PC-3 (cell line): ENCODE measurements at regions of chrX and their contacts with region 1.

Region 1: GRCh38 chrX:17495044-17495443 is 120.0 kb downstream of the NHS start:
- DNase-seq: peak; percentile 87
- ATAC-seq: peak; percentile 91
- H3K4me3 ChIP-seq: no peak overlapping the region; the same call in 1 of the 2 replicates
- H3K27ac ChIP-seq: peak overlapping the region; percentile 97
- H3K4me1 ChIP-seq: peaks cover 63% of the 10 kb centered on the region
- H3K27me3 ChIP-seq: no peaks in the 10 kb centered on the region
- CTCF ChIP-seq: no peak

Region 2: DNA sequence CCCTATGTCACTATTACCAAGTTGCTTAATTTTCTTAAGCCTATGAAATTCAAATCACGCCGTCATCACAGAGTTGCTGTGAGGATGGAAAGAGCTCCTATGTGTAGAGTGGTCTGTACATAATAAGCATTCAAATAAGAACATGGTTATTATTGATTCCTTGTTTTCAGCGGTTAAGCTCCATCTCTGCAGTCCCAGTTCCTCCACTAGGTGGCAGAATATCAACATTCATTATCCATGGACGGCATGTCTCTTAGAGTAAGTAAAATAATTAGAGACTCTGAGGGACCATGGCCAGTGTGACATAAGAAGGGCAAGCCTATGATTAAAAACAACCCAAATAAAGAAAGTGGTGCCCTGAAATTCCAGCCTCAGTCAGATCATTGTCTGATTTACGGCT is 252.6 kb before region 1 on chrX:
- CTCF ChIA-PET with region 1: no interaction called
- POLR2A ChIA-PET with region 1: no interaction called
- intact Hi-C with region 1: no loop called
- DNase-seq: peak; percentile 78
- ATAC-seq: peak; percentile 78
- H3K4me3 ChIP-seq: no peak overlapping the region
- H3K27ac ChIP-seq: no peak overlapping the region
- H3K4me1 ChIP-seq: no peaks in the 10 kb centered on the region
- H3K27me3 ChIP-seq: no peaks in the 10 kb centered on the region
- CTCF ChIP-seq: peak; percentile 83

Region 3: GRCh38 chrX:17413228-17413627 is 81.8 kb before region 1 on chrX:
- CTCF ChIA-PET with region 1: no interaction called
- POLR2A ChIA-PET with region 1: no interaction called
- intact Hi-C with region 1: loop called (anchors 1 kb)
- DNase-seq: peak; percentile 45
- ATAC-seq: peak; percentile 23
- H3K4me3 ChIP-seq: peak overlapping the region; percentile 55
- H3K27ac ChIP-seq: peak overlapping the region; percentile 99
- H3K4me1 ChIP-seq: peaks cover 49% of the 10 kb centered on the region
- H3K27me3 ChIP-seq: no peaks in the 10 kb centered on the region
- CTCF ChIP-seq: no peak

Region 4: GRCh38 chrX:17441965-17442364 is 53.1 kb before region 1 on chrX:
- CTCF ChIA-PET with region 1: no interaction called
- POLR2A ChIA-PET with region 1: no interaction called
- intact Hi-C with region 1: loop called (anchors 1 kb)
- DNase-seq: peak; percentile 80
- ATAC-seq: peak; percentile 97
- H3K4me3 ChIP-seq: 0 out of 2 replicates have a peak overlapping the region, but pooled peaks have one; percentile 30
- H3K27ac ChIP-seq: peak overlapping the region; percentile 93
- H3K4me1 ChIP-seq: peaks cover 33% of the 10 kb centered on the region
- H3K27me3 ChIP-seq: no peaks in the 10 kb centered on the region
- CTCF ChIP-seq: no peak

Region 5: GRCh38 chrX:17597836-17598442 is 102.9 kb after region 1 on chrX:
- CTCF ChIA-PET with region 1: no interaction called
- POLR2A ChIA-PET with region 1: no interaction called
- intact Hi-C with region 1: loop called (anchors 2 kb)
- DNase-seq: no peak
- ATAC-seq: no peak
- H3K4me3 ChIP-seq: no peak overlapping the region
- H3K27ac ChIP-seq: no peak overlapping the region
- H3K4me1 ChIP-seq: peaks cover 23% of the 10 kb centered on the region
- H3K27me3 ChIP-seq: no peaks in the 10 kb centered on the region
- CTCF ChIP-seq: no peak